ENCODE measurements at regions of chr18 and their contacts with region 1.

Region 1: DNA sequence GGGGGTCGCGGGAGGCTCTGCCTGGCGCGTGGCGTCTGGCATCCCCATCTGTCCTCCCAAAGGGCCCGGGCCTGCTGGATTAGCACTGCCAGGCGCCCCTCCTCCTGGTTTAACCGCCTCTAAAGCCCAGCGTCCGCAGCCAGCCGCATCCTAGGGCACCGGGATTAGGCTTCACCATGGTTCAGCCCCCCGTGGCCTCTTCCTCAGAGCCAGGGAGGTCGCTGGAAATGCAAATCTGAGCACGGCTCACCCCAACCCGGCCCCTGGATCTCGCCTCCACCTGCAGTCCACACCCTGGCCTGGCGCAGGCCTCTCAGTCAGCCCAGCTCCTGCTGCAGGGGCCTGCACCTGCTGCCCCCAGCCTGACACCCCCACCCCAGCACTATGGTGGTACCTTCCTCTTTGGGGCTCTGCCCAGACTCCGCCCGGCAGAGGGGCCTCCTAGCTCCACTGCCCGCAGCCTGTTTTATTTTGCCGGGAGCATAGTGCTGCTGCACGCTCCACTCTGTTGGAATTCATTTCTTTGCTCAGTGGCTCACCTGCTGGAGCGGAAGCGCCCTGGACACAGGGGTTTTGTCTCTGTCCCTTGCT is 13.2 kb downstream of the PRELID3A start:
- DNase-seq: peak; percentile 87
- H3K4me3 ChIP-seq: peak overlapping the region in 1 of 2 experiments; percentile 26; a peak in 1 of 4 replicates
- H3K27ac ChIP-seq: peak overlapping the region in 1 of 2 experiments; percentile 70; a peak in 2 of 4 replicates
- H3K4me1 ChIP-seq: peaks cover 0 to 7% of the 10 kb centered on the region in 2 experiments; a peak in 1 of 4 replicates
- H3K27me3 ChIP-seq: no peaks in the 10 kb centered on the region
- CTCF ChIP-seq: no peak
- EP300 ChIP-seq: no peak
- RAD21 ChIP-seq: no peak

Region 2: GRCh38 chr18:12106471-12106870 is 314.5 kb before region 1 on chr18:
- CTCF ChIA-PET with region 1: no interaction called
- POLR2A ChIA-PET with region 1: no interaction called
- DNase-seq: no peak
- H3K4me3 ChIP-seq: no peak overlapping the region
- H3K27ac ChIP-seq: no peak overlapping the region
- H3K4me1 ChIP-seq: no peaks in the 10 kb centered on the region; a peak in 1 of 4 replicates
- H3K27me3 ChIP-seq: no peaks in the 10 kb centered on the region; the same call in 1 of the 2 replicates
- CTCF ChIP-seq: no peak
- EP300 ChIP-seq: no peak
- RAD21 ChIP-seq: no peak

Region 3: GRCh38 chr18:12408247-12408869 is 12.6 kb before region 1 on chr18:
- CTCF ChIA-PET with region 1: interaction called, 6 read pairs
- POLR2A ChIA-PET with region 1: interaction called, 15 read pairs
- DNase-seq: peak; percentile 34
- H3K4me3 ChIP-seq: peak overlapping the region; percentile 56 to 78
- H3K27ac ChIP-seq: peak overlapping the region; percentile 73 to 76
- H3K4me1 ChIP-seq: peaks cover 11 to 15% of the 10 kb centered on the region in 2 experiments; a peak in 2 of 4 replicates
- H3K27me3 ChIP-seq: no peaks in the 10 kb centered on the region
- CTCF ChIP-seq: no peak
- EP300 ChIP-seq: no peak
- RAD21 ChIP-seq: no peak

Region 4: DNA sequence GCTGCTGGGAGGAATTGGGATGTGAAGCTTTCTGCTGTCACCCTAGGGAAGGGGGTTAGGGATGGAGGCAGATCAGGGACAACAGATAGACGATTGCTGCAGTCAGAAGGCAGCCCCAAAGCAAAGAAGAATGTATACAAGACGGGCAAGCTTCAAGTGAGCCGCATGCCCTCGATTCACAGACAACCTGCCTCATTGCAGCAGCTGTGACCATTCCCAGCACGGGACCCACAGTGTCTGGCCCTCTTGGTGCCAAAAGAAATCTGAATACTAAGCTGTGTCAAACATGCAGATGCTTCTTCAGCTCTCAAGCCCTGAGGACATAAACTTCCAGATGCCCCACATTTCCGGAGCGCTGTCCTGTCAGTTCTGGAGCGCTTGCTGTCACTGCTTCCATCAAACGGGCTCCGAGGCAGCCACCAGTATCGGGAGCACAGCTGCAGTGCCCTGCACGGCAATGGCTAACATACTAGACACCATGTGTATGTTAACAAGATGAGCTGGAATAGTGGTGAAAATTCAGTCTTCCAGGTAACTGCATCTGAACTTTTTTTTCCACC is 20.6 kb after region 1 on chr18:
- CTCF ChIA-PET with region 1: interaction called, 11 read pairs
- POLR2A ChIA-PET with region 1: interaction called, 5 read pairs
- DNase-seq: peak; percentile 79
- H3K4me3 ChIP-seq: peak overlapping the region in 1 of 2 experiments; percentile 21; a peak in 1 of 4 replicates
- H3K27ac ChIP-seq: peak overlapping the region in 1 of 2 experiments; percentile 83; a peak in 2 of 4 replicates
- H3K4me1 ChIP-seq: peaks cover 0 to 9% of the 10 kb centered on the region in 2 experiments; a peak in 1 of 4 replicates
- H3K27me3 ChIP-seq: no peaks in the 10 kb centered on the region
- CTCF ChIP-seq: no peak
- EP300 ChIP-seq: peak in 1 of 2 experiments; percentile 85; a peak in 2 of 4 replicates
- RAD21 ChIP-seq: peak; percentile 49

Region 5: DNA sequence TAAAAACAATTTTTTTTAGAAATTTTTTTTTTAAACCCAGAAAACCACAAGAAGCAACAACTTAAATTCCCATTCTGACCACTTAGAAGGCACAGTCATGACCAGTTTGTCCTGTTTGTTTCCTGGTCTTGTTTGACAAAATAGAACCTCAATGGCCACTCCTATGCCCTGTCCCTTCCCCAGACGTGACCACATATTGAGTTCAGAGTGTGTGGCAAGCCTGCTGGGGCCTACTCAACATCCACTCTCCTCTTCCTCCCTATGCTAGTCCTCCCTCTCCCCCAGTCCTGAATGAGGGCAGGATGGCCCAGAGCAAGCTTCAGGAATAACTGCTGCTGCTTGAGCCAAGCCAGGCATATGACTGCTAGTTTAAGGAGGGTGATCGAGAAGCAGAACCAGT is 76.4 kb after region 1 on chr18:
- CTCF ChIA-PET with region 1: no interaction called
- POLR2A ChIA-PET with region 1: no interaction called
- DNase-seq: no peak
- H3K4me3 ChIP-seq: no peak overlapping the region
- H3K27ac ChIP-seq: no peak overlapping the region
- H3K4me1 ChIP-seq: no peaks in the 10 kb centered on the region
- H3K27me3 ChIP-seq: no peaks in the 10 kb centered on the region
- CTCF ChIP-seq: no peak
- EP300 ChIP-seq: no peak
- RAD21 ChIP-seq: no peak

Measured in SK-N-SH (cell line).